ENCODE measurements at regions of chr11 and their contacts with region 1.

Region 1: GRCh38 chr11:94623120-94623735 is 56.1 kb downstream of the PIWIL4 start:
- DNase-seq: peak; percentile 89 to 95 (median 94)
- H3K4me3 ChIP-seq: no peak overlapping the region
- H3K27ac ChIP-seq: no peak overlapping the region
- H3K4me1 ChIP-seq: peaks cover 0 to 7% (median 0%) of the 10 kb centered on the region in 4 experiments
- H3K27me3 ChIP-seq: no peaks in the 10 kb centered on the region

Region 2: GRCh38 chr11:94325681-94326080 is 297.5 kb before region 1 on chr11:
- CTCF ChIA-PET with region 1: no interaction called
- POLR2A ChIA-PET with region 1: no interaction called
- DNase-seq: peak; percentile 24 to 51 (median 50)
- H3K4me3 ChIP-seq: no peak overlapping the region
- H3K27ac ChIP-seq: no peak overlapping the region
- H3K4me1 ChIP-seq: no peaks in the 10 kb centered on the region
- H3K27me3 ChIP-seq: peaks cover 0 to 2% (median 0%) of the 10 kb centered on the region in 5 experiments

Region 3: GRCh38 chr11:94613120-94613519 is 10.1 kb before region 1 on chr11:
- CTCF ChIA-PET with region 1: interaction called, 33 read pairs
- POLR2A ChIA-PET with region 1: no interaction called
- DNase-seq: no peak
- H3K4me3 ChIP-seq: no peak overlapping the region
- H3K27ac ChIP-seq: no peak overlapping the region
- H3K4me1 ChIP-seq: peaks cover 0 to 6% (median 0%) of the 10 kb centered on the region in 4 experiments
- H3K27me3 ChIP-seq: no peaks in the 10 kb centered on the region

Region 4: GRCh38 chr11:94757037-94757735 is 134.0 kb after region 1 on chr11:
- CTCF ChIA-PET with region 1: interaction called, 84 read pairs
- POLR2A ChIA-PET with region 1: no interaction called
- DNase-seq: peak; percentile 36 to 87 (median 84)
- H3K4me3 ChIP-seq: no peak overlapping the region
- H3K27ac ChIP-seq: no peak overlapping the region
- H3K4me1 ChIP-seq: peaks cover 0 to 12% (median 7%) of the 10 kb centered on the region in 4 experiments
- H3K27me3 ChIP-seq: no peaks in the 10 kb centered on the region

Region 5: GRCh38 chr11:94776351-94777321 is 153.4 kb after region 1 on chr11:
- CTCF ChIA-PET with region 1: interaction called, 11 read pairs
- POLR2A ChIA-PET with region 1: no interaction called
- DNase-seq: peak in 2 of 3 donors; percentile 25 to 37
- H3K4me3 ChIP-seq: peak overlapping the region in 1 of 7 experiments; percentile 2
- H3K27ac ChIP-seq: no peak overlapping the region
- H3K4me1 ChIP-seq: peaks cover 13 to 22% (median 18%) of the 10 kb centered on the region in 4 experiments
- H3K27me3 ChIP-seq: no peaks in the 10 kb centered on the region

Region 6: DNA sequence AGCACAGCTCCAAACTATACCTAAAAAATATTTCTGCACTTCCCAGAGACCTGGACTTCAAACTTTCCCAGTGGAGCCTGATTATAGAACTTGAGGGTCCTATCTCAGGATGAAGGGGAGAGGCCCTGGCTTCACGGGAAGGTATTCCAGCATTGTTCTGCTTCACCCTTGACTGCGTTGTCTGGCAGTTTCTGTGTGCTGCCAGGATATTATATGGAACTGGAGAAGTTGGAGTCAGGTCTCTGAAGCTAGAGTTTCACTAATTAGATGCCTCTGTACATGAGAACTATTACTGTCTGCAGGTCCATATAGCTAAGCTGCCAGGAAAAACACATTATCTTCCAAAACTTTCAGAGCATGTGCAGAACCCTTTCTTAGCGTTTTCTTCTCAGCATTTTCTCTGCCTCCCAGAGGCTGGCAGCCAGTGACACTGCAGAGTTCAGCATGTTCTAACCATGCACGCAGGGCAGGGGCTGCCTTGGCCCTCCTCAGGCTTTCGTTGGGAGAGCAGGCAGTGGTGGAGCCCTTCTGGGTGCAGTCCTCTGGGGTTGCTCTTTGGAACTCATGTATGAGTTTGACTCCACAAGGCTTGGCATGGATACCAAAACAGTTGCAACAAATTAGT is 250.8 kb after region 1 on chr11:
- CTCF ChIA-PET with region 1: interaction called, 11 read pairs
- POLR2A ChIA-PET with region 1: no interaction called
- DNase-seq: no peak
- H3K4me3 ChIP-seq: no peak overlapping the region
- H3K27ac ChIP-seq: no peak overlapping the region
- H3K4me1 ChIP-seq: peaks cover 10 to 19% (median 16%) of the 10 kb centered on the region in 4 experiments
- H3K27me3 ChIP-seq: no peaks in the 10 kb centered on the region

Region 7: GRCh38 chr11:94968334-94968958 is 345.2 kb after region 1 on chr11:
- CTCF ChIA-PET with region 1: interaction called, 20 read pairs
- POLR2A ChIA-PET with region 1: no interaction called
- DNase-seq: peak; percentile 16 to 33 (median 33)
- H3K4me3 ChIP-seq: no peak overlapping the region
- H3K27ac ChIP-seq: no peak overlapping the region
- H3K4me1 ChIP-seq: peaks cover 6 to 12% (median 9%) of the 10 kb centered on the region in 4 experiments
- H3K27me3 ChIP-seq: no peaks in the 10 kb centered on the region

Measured in common myeloid progenitor, CD34-positive (primary cell).